KBM-7 (cell line): ENCODE measurements at regions of chr2 and their contacts with region 1.

Region 1: GRCh38 chr2:217785544-217786045 is 217.2 kb downstream of the TNS1 start:
- DNase-seq: peak; percentile 89

Region 2: DNA sequence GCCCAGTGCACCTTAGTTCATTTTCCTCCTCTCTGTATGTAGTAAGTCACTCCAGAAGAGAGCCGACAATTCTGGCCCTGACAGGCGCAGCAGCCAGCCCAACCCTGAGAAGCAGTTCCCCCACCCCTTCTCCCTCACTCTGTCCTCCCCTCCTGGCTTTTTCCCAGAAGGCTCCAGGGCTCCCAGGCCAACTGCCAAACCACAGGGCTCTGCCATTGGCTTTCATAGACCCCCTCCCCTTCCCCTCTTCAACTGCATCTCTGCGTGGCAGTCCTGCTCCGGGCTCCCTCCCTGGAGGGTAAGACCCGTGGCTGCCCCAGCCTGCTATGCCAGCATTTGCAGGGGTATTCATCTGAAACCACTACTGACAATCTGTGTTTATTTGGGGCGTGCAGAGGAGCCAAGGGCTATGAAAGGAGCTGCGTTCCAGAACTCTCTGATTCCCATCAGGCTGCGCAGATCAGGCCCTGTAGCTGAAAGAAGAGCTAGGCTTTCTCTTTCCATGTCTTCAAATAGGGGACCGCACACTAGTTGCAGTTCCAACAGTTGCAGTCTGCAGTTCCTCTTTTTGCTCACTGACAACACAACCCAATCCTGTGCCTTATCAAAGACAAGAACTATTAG is 537.2 kb before region 1 on chr2:
- in situ Hi-C with region 1: no loop called
- DNase-seq: peak; percentile 36

Region 3: GRCh38 chr2:218010140-218010983 is 224.8 kb after region 1 on chr2:
- in situ Hi-C with region 1: loop called (anchors 25 kb)
- DNase-seq: peak; percentile 41